ENCODE measurements at regions of chr20 and their contacts with region 1.

Region 1: GRCh38 chr20:58254890-58255289 is 26.4 kb upstream of the ANKRD60 start:
- DNase-seq: no peak
- ATAC-seq: no peak
- H3K4me3 ChIP-seq: no peak overlapping the region
- H3K4me3 Mint-ChIP-seq: no peak overlapping the region
- H3K27ac ChIP-seq: no peak overlapping the region
- H3K27ac Mint-ChIP-seq: no peak overlapping the region
- H3K4me1 ChIP-seq: no peaks in the 10 kb centered on the region
- H3K4me1 Mint-ChIP-seq: peaks cover 20% of the 10 kb centered on the region
- H3K27me3 ChIP-seq: no peaks in the 10 kb centered on the region
- H3K27me3 Mint-ChIP-seq: no peaks in the 10 kb centered on the region
- CTCF ChIP-seq: no peak

Region 2: DNA sequence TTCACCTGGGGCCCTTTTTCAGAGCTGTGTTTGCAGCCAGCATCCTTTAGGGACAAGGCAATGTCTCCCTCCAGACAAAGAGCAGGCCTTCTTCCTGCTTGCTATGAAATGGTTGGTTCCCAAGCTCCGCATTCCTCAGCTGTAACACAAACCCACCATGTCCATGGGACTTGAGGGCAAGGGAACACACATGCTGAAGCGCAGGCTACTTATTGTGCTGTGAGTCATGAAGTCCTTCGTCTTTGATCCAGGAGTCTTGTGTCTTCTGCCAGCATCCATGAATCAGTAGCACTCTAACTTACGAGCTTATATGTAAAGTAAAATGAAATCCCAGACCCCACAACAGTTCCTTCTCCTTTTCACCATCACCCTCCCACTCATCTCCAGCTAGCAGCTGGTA is 85.4 kb before region 1 on chr20:
- CTCF ChIA-PET with region 1: no interaction called
- POLR2A ChIA-PET with region 1: no interaction called
- intact Hi-C with region 1: no loop called
- DNase-seq: no peak
- ATAC-seq: no peak
- H3K4me3 ChIP-seq: no peak overlapping the region
- H3K4me3 Mint-ChIP-seq: no peak overlapping the region
- H3K27ac ChIP-seq: no peak overlapping the region
- H3K27ac Mint-ChIP-seq: no peak overlapping the region
- H3K4me1 ChIP-seq: peaks cover 4% of the 10 kb centered on the region
- H3K4me1 Mint-ChIP-seq: peaks cover 19% of the 10 kb centered on the region
- H3K27me3 ChIP-seq: no peaks in the 10 kb centered on the region
- H3K27me3 Mint-ChIP-seq: no peaks in the 10 kb centered on the region
- CTCF ChIP-seq: no peak

Region 3: GRCh38 chr20:58303547-58303946 is 48.7 kb after region 1 on chr20:
- CTCF ChIA-PET with region 1: no interaction called
- POLR2A ChIA-PET with region 1: no interaction called
- intact Hi-C with region 1: loop called in 1 of 2 experiments (anchors 2 kb)
- DNase-seq: no peak
- ATAC-seq: no peak
- H3K4me3 ChIP-seq: no peak overlapping the region
- H3K4me3 Mint-ChIP-seq: no peak overlapping the region
- H3K27ac ChIP-seq: no peak overlapping the region
- H3K27ac Mint-ChIP-seq: peak overlapping the region; percentile 98
- H3K4me1 ChIP-seq: peaks cover 27% of the 10 kb centered on the region
- H3K4me1 Mint-ChIP-seq: peaks cover 51% of the 10 kb centered on the region
- H3K27me3 ChIP-seq: no peaks in the 10 kb centered on the region
- H3K27me3 Mint-ChIP-seq: no peaks in the 10 kb centered on the region
- CTCF ChIP-seq: no peak

Measured in CD4-positive, alpha-beta T cell (primary cell).